MCF 10A (cell line): ENCODE measurements at regions of chr1 and their contacts with region 1.

Region 1: DNA sequence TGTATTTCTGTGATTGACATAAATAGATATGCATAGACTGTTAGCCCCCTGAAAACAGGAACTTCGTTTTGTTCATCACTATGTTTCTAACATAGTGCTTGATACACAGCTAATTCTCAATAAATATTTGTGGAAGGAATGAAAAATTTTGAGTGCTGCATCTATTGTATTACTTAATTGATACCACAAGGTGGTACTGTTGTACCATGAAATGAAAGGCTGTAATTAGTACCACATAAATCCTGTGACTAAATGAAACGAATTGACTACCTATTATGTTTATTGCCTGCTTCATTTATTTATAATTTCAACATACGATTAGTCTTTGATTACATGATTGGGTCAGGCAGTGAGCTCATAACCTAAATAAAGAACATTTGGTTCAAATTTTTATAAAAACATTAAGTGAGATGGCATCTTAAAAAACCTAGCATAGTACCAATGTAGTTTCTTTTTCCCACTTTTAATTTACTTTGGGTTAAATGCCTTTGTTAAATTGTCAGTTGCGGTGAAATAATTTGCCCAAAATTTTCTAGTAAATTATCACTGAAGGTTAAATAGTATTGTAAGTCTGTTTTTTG is 15.0 kb upstream of the TGFB2 start:
- DNase-seq: peak; percentile 67
- H3K4me3 Mint-ChIP-seq: no peak overlapping the region
- H3K27ac Mint-ChIP-seq: peak overlapping the region; percentile 55
- H3K4me1 Mint-ChIP-seq: no peaks in the 10 kb centered on the region
- H3K27me3 Mint-ChIP-seq: no peaks in the 10 kb centered on the region
- CTCF ChIP-seq: peak; percentile 84

Region 2: GRCh38 chr1:218312509-218312908 is 17.6 kb before region 1 on chr1:
- CTCF ChIA-PET with region 1: interaction called, 20 read pairs
- POLR2A ChIA-PET with region 1: no interaction called
- intact Hi-C with region 1: no loop called
- DNase-seq: no peak
- H3K4me3 Mint-ChIP-seq: no peak overlapping the region
- H3K27ac Mint-ChIP-seq: no peak overlapping the region
- H3K4me1 Mint-ChIP-seq: no peaks in the 10 kb centered on the region
- H3K27me3 Mint-ChIP-seq: no peaks in the 10 kb centered on the region
- CTCF ChIP-seq: no peak

Region 3: DNA sequence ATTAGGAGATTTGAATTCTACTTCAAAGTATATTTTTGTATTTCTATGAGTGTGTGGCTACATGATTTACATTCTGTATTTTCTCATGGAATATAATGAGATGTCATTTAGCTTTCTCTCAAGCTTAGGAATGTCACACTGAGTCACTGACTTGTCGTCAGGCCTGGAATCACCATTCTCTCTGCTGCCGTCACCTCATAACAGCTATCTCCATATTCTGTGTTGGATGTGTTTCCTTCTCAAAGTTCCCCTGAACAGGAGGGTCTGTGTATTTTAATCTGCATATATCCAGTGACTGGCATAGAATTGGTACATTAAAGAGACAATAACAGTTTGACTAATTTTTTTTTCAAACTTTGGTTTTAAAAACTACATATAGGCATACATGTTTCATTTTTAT is 879.4 kb after region 1 on chr1:
- CTCF ChIA-PET with region 1: no interaction called
- POLR2A ChIA-PET with region 1: no interaction called
- intact Hi-C with region 1: loop called (anchors 1 kb)
- DNase-seq: no peak
- H3K4me3 Mint-ChIP-seq: no peak overlapping the region
- H3K27ac Mint-ChIP-seq: no peak overlapping the region
- H3K4me1 Mint-ChIP-seq: no peaks in the 10 kb centered on the region
- H3K27me3 Mint-ChIP-seq: no peaks in the 10 kb centered on the region
- CTCF ChIP-seq: no peak

Region 4: DNA sequence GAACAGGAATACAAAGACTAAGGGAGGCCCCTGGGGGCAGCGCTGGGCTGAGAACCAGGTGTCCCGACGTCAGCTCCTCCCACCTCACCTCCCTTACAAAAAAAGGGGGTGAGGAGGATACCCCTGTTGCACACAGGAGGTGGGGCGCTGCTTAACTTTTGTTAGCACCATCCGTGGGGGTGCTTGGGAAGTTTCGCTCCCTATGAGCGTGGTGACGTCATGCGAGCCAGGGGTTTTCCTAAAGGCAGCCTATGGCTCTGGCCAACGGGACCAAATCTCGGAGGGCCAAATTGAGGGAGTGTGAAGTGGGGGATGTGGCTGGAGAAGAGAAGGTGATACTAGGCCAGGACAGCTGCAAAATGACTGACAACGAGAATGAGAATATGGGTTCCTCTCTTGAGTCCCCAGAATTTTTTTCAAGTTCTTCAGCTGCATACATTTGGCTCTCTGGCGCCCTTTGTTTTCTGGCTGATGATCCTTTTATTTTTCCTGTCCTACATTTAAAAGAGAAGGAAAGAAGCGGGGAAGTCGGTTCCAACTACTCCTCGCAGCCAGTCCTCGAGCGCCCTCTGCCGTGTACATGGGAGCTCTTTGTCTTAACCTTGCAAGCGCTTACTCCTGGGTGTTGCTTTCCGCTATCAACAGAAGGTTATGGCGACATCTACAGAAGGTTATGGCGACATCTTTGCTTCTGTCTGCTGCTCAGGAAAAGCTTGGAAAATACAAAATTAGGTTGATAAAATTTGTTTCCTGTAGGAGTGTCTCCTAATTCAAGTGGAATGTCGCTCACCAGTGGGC is 1330.7 kb after region 1 on chr1:
- CTCF ChIA-PET with region 1: no interaction called
- POLR2A ChIA-PET with region 1: no interaction called
- intact Hi-C with region 1: loop called (anchors 1 kb)
- DNase-seq: peak; percentile 89
- H3K4me3 Mint-ChIP-seq: no peak overlapping the region
- H3K27ac Mint-ChIP-seq: no peak overlapping the region
- H3K4me1 Mint-ChIP-seq: peaks cover 10% of the 10 kb centered on the region
- H3K27me3 Mint-ChIP-seq: peaks cover 55% of the 10 kb centered on the region
- CTCF ChIP-seq: peak; percentile 57